HEK293 (cell line): ENCODE measurements at regions of chr7 and their contacts with region 1.

Region 1: GRCh38 chr7:30164567-30164966 is 29.8 kb downstream of the MTURN start:
- H3K4me3 ChIP-seq: no peak overlapping the region
- H3K27ac ChIP-seq: no peak overlapping the region
- H3K4me1 ChIP-seq: peaks cover 17% of the 10 kb centered on the region
- CTCF ChIP-seq: no peak

Region 2: DNA sequence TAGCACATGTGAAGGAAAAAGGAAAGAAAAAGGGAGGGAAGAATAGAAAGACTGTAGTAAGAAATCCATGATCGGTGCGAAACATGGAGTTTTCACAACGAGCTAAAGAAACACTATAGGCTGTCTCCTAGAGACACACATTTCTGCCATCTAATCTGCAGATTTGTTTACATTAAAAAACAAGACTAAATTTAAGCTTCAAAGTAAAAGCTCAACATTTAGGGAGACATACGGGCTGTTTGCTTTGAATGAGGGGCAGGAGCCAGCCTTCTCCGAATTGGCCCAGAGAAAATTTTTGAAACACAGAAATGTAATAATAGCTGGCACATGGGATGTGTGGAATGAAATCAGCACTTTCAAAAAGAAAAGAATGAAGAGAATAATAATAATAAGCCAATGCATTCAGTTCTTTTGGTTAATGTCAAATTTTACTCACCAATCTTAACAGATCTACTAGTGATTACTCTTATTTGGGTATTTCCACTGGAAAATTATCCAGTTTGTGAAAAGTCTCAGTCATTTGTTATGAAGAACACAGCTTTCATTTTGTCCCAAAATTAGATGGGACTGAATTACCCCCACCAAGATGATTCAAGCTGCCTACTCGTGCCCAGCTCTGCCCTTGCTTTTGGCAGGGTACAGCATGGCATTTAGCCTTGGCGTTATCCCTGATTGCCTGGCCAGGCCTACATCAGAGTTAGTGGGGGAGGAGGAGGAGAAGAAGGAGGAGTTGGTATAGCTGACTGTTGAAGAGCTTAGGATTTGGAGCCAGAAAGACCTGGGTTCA is 17.4 kb after region 1 on chr7:
- CTCF ChIA-PET with region 1: interaction called, 13 read pairs
- POLR2A ChIA-PET with region 1: no interaction called
- H3K4me3 ChIP-seq: no peak overlapping the region
- H3K27ac ChIP-seq: no peak overlapping the region
- H3K4me1 ChIP-seq: no peaks in the 10 kb centered on the region
- CTCF ChIP-seq: no peak